ENCODE measurements at regions of chr14 and their contacts with region 1.

Region 1: GRCh38 chr14:63752513-63753169 is 24.8 kb upstream of the SGPP1 start:
- DNase-seq: no peak
- ATAC-seq: no peak
- H3K4me3 Mint-ChIP-seq: no peak overlapping the region
- H3K27ac Mint-ChIP-seq: no peak overlapping the region
- H3K4me1 Mint-ChIP-seq: no peaks in the 10 kb centered on the region
- H3K27me3 Mint-ChIP-seq: no peaks in the 10 kb centered on the region

Region 2: GRCh38 chr14:63328787-63329737 is 423.6 kb before region 1 on chr14:
- CTCF ChIA-PET with region 1: no interaction called
- POLR2A ChIA-PET with region 1: no interaction called
- intact Hi-C with region 1: no loop called
- DNase-seq: no peak
- ATAC-seq: no peak
- H3K4me3 Mint-ChIP-seq: no peak overlapping the region
- H3K27ac Mint-ChIP-seq: no peak overlapping the region
- H3K4me1 Mint-ChIP-seq: no peaks in the 10 kb centered on the region
- H3K27me3 Mint-ChIP-seq: peaks cover 18% of the 10 kb centered on the region

Region 3: GRCh38 chr14:63605041-63605532 is 147.6 kb before region 1 on chr14:
- CTCF ChIA-PET with region 1: no interaction called
- POLR2A ChIA-PET with region 1: interaction called, 11 read pairs
- intact Hi-C with region 1: no loop called
- DNase-seq: no peak
- ATAC-seq: peak; percentile 16
- H3K4me3 Mint-ChIP-seq: no peak overlapping the region
- H3K27ac Mint-ChIP-seq: no peak overlapping the region
- H3K4me1 Mint-ChIP-seq: peaks cover 7% of the 10 kb centered on the region
- H3K27me3 Mint-ChIP-seq: no peaks in the 10 kb centered on the region

Measured in activated CD4-positive, alpha-beta T cell treated with anti-CD3 and anti-CD28 coated beads for 36 hours (primary cell).